Activated T-helper 1 cell treated with anti-CD3 and anti-CD28 coated beads, Interleukin-12 subunit alpha, Interleukin-12 subunit beta, Interleukin-2, Interleukin-4 antibody, amounts not matched to agents 30 ng/mL and 10 ng/mL and 1 ng/mL, durations not matched to agents 14 hours and 24 hours and 36 hours (primary cell): ENCODE measurements at regions of chr3 and their contacts with region 1.

Region 1: GRCh38 chr3:42804106-42804830 is at the start of gene HIGD1A:
- DNase-seq: peak; percentile 92
- H3K4me3 Mint-ChIP-seq: peak within 1 kb of the TSS; percentile 99
- H3K27ac Mint-ChIP-seq: peak within 1 kb of the TSS; percentile 90
- H3K4me1 Mint-ChIP-seq: peaks cover 43% of the 10 kb centered on the region
- H3K27me3 Mint-ChIP-seq: peaks cover 27% of the 10 kb centered on the region
- total RNA-seq, gene HIGD1A: 90.1 and 97.5 TPM in 2 replicates

Region 2: GRCh38 chr3:42489116-42489936 is 314.9 kb before region 1 on chr3:
- intact Hi-C with region 1: no loop called
- DNase-seq: no peak
- H3K4me3 Mint-ChIP-seq: no peak overlapping the region
- H3K27ac Mint-ChIP-seq: no peak overlapping the region
- H3K4me1 Mint-ChIP-seq: no peaks in the 10 kb centered on the region
- H3K27me3 Mint-ChIP-seq: peaks cover 15% of the 10 kb centered on the region

Region 3: GRCh38 chr3:42772670-42773408 is 31.4 kb before region 1 on chr3 and contains the start of gene CCDC13:
- intact Hi-C with region 1: loop called (anchors 1 kb)
- DNase-seq: peak; percentile 86
- H3K4me3 Mint-ChIP-seq: peak within 1 kb of the TSS; percentile 85
- H3K27ac Mint-ChIP-seq: peak within 1 kb of the TSS; percentile 85
- H3K4me1 Mint-ChIP-seq: peaks cover 12% of the 10 kb centered on the region
- H3K27me3 Mint-ChIP-seq: peaks cover 9% of the 10 kb centered on the region
- total RNA-seq, gene CCDC13: 0.32 TPM in 1 of 2 replicates, not detected in the other

Region 4: GRCh38 chr3:42780892-42781700 is 23.2 kb before region 1 on chr3:
- intact Hi-C with region 1: loop called (anchors 1 kb)
- DNase-seq: no peak
- H3K4me3 Mint-ChIP-seq: no peak overlapping the region
- H3K27ac Mint-ChIP-seq: no peak overlapping the region
- H3K4me1 Mint-ChIP-seq: peaks cover 6% of the 10 kb centered on the region
- H3K27me3 Mint-ChIP-seq: no peaks in the 10 kb centered on the region

Region 5: GRCh38 chr3:42831321-42831713 is 27.0 kb after region 1 on chr3:
- intact Hi-C with region 1: loop called (anchors 1 kb)
- DNase-seq: peak; percentile 59
- H3K4me3 Mint-ChIP-seq: no peak overlapping the region
- H3K27ac Mint-ChIP-seq: no peak overlapping the region
- H3K4me1 Mint-ChIP-seq: peaks cover 9% of the 10 kb centered on the region
- H3K27me3 Mint-ChIP-seq: peaks cover 11% of the 10 kb centered on the region